ENCODE measurements at regions of chr19 and their contacts with region 1.

Region 1: GRCh38 chr19:18281082-18282020 is at the start of gene JUND:
- DNase-seq: peak; percentile 98 to 99 (median 99)
- H3K4me3 ChIP-seq: peak within 1 kb of the TSS; percentile 86 to 100 (median 99)
- H3K27ac ChIP-seq: peak within 1 kb of the TSS; percentile 98 to 99
- H3K4me1 ChIP-seq: peaks cover 3 to 42% (median 25%) of the 10 kb centered on the region in 4 experiments
- H3K27me3 ChIP-seq: no peaks in the 10 kb centered on the region

Region 2: GRCh38 chr19:18203863-18204393 is 77.4 kb before region 1 on chr19 and contains the start of gene RAB3A:
- CTCF ChIA-PET with region 1: interaction called, 7 read pairs
- POLR2A ChIA-PET with region 1: interaction called, 10 read pairs
- DNase-seq: peak; percentile 100
- H3K4me3 ChIP-seq: peak within 1 kb of the TSS; percentile 49 to 92 (median 75)
- H3K27ac ChIP-seq: peak within 1 kb of the TSS; percentile 54 to 89
- H3K4me1 ChIP-seq: peaks cover 0 to 30% (median 28%) of the 10 kb centered on the region in 4 experiments
- H3K27me3 ChIP-seq: no peaks in the 10 kb centered on the region

Region 3: DNA sequence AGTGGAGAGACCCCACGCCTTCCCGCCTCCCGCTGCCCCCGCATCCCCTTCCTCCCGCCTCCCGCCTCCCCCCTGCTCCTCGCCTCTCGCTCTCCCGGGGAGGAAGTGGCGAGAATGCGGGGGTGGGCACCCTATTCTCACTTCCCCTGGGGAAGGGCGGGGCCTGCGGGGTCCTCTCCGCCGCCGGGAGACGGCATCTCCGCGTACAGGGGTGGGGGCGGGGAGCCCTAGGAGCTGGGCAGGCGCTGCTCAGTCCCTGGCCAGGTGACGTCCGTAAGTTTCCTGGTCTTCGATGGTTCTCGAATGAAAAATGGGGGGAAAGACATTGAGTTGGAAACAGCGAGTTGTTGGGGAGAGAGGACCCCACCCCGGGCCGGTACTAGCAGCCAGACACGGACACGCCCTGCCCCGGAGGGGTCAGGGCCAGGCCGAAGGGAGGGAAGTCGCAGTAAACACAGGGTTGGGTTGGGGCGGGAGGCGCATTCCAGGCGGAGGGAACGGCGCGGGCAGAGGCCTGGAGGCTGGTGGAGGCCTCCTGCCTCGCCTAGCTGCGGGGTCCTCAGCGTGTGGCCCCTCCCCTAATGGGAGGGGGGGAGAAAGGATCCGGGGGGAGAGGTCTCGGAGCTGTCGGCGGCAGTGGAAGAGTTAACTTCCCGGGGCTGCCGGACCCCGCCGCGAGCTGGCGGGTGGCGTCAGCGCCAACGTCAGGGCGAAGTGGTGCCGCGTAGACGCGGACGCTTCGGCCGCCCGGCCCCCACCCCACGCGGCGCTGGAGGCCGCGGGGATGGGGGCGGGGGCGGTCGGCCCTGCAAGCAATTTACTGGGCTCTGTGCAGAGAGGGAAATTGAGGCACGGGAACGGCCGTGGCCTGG is 10.5 kb after region 1 on chr19:
- CTCF ChIA-PET with region 1: interaction called, 52 read pairs
- POLR2A ChIA-PET with region 1: interaction called, 145 read pairs
- DNase-seq: peak; percentile 90 to 92 (median 90)
- H3K4me3 ChIP-seq: peak overlapping the region; percentile 44 to 90 (median 77)
- H3K27ac ChIP-seq: peak overlapping the region; percentile 77 to 95
- H3K4me1 ChIP-seq: peaks cover 4 to 69% (median 40%) of the 10 kb centered on the region in 4 experiments
- H3K27me3 ChIP-seq: no peaks in the 10 kb centered on the region

Region 4: DNA sequence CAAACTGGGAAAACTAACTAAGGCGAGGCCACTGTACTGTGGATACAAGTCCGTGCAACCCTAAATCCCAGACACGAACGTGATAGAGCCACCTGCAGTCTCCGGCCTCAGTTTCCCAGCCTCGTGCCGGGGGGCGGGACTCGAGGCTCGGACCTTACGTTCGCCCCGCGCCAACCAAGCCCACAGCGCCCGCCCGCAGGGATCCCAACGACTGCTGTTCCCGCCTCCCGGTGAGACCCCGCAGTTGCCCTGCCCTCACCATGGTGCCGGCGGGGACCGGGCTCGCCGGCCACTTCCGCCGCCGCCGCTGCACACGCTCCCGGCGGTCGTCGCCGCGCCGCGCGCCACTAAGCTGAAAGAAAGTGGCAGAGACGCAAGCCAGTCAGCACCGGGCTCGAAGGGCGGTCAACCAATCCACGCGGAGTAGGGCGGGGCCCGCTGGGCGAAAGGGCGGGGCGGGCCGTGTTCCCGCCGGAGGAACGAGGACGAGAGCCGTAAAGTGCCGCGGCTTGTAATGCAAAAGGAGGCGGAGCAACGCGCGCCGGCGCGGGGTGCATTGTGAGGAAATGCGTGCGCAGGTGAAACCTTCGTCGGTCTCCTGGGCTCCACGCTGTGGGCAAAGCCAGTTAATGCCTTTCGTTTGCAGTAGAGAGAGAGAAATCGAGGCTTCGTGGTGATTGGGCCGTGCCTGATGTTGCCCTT is 41.6 kb after region 1 on chr19 and contains the start of gene LSM4:
- CTCF ChIA-PET with region 1: interaction called, 354 read pairs
- POLR2A ChIA-PET with region 1: interaction called, 217 read pairs
- DNase-seq: peak; percentile 99
- H3K4me3 ChIP-seq: peak within 1 kb of the TSS; percentile 63 to 95 (median 82)
- H3K27ac ChIP-seq: peak within 1 kb of the TSS; percentile 51 to 89
- H3K4me1 ChIP-seq: peaks cover 13 to 62% (median 56%) of the 10 kb centered on the region in 4 experiments
- H3K27me3 ChIP-seq: no peaks in the 10 kb centered on the region

Region 5: DNA sequence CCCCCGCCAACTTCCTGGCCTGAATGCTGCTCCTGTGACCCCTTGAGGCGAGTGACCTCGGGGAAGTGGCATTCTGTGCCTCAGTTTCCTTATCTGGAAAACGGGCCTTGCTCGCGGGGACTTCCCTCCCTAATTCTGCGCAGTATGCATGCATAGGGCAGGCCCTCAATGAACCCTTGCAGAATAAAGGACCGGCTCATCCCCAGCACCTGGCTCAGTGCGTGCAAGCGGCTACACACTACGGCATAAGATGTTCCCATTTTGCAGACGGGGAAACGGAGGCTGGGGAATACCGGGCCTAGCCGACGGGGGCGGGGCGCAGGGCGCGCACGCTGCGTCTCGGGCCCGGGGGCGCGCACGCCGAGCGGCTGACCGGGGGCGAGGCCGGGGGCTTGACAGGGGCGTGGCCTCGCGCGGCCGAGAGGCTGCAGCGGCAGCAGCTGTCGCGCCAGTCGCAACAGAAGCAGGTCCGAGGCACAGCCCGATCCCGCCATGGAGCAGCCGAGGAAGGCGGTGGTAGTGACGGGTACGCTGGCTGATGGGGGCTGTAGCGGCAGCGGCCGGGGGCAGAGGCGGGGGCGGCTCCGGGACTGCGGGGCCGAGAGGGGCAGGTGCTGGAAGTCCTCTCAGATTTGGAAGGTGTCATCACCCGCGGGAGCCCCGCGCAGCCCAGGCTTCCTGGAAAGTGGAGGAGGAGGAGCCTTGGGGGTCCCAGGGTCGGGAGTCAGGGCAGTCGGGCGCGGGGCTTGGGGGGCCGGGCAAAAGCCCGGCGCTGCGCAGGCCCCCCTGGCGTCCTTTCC is 59.0 kb after region 1 on chr19 and contains the start of gene PGPEP1:
- CTCF ChIA-PET with region 1: interaction called, 32 read pairs
- POLR2A ChIA-PET with region 1: interaction called, 10 read pairs
- DNase-seq: peak; percentile 30 to 67 (median 62)
- H3K4me3 ChIP-seq: peak within 1 kb of the TSS; percentile 75 to 92 (median 81)
- H3K27ac ChIP-seq: peak within 1 kb of the TSS; percentile 72 to 87
- H3K4me1 ChIP-seq: peaks cover 2 to 31% (median 22%) of the 10 kb centered on the region in 4 experiments
- H3K27me3 ChIP-seq: no peaks in the 10 kb centered on the region

Region 6: GRCh38 chr19:18450931-18451845 is 169.8 kb after region 1 on chr19:
- CTCF ChIA-PET with region 1: no interaction called
- POLR2A ChIA-PET with region 1: no interaction called
- DNase-seq: peak; percentile 62 to 78 (median 72)
- H3K4me3 ChIP-seq: no peak overlapping the region
- H3K27ac ChIP-seq: no peak overlapping the region
- H3K4me1 ChIP-seq: peaks cover 0 to 3% (median 0%) of the 10 kb centered on the region in 4 experiments
- H3K27me3 ChIP-seq: no peaks in the 10 kb centered on the region

Measured in common myeloid progenitor, CD34-positive (primary cell).